Posterior vena cava (tissue), 2 donors: ENCODE measurements at regions of chr9 and their contacts with region 1.

Region 1: DNA sequence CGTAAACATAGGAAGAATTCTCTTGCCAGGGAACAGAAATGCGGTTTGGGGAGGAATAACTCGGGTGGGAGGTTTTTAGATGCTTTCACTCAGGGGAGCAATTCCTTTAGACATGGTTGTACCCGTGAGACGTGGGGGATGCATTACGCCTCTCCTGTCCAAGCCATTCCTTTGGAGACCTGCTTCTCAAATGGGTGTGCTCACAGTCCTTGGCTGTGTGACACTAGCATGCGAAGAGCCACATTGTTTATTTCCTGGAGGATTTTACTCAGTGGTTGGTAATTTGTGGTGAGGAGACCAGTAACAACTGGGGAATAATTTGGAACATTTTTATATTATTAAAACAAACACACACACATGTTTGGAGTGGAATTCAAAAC is 18.5 kb downstream of the COL15A1 start:
- DNase-seq: no peak

Region 2: DNA sequence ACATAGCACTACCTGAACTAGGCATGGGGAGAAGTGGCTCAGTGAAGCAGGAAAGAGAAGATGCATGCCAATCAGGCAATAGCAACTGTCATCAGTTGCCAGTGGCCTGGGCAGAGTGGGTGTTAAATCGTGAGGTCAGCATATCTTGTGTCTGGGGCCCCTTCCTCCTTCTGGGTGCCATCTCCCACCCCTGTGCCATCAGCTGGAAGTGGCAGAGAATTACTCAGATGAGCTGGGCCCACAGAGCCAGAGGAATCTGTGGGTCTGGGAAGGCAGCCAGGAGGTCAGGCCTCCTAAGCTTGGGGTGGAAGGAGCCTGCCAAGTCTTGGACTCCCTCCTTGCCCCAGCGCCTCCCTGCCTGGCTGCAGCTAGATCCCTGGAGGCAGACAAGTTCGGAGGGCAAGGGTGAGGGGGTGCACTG is 88.2 kb before region 1 on chr9:
- intact Hi-C with region 1: loop called in 1 of 2 experiments (anchors 10 kb)
- DNase-seq: peak; percentile 89

Region 3: GRCh38 chr9:98881836-98882568 is 80.2 kb before region 1 on chr9:
- intact Hi-C with region 1: loop called (anchors 5 to 10 kb)
- DNase-seq: peak; percentile 84

Region 4: GRCh38 chr9:99019790-99020331 is 57.7 kb after region 1 on chr9:
- intact Hi-C with region 1: no loop called
- DNase-seq: no peak